Activated CD4-positive, alpha-beta T cell treated with anti-CD3 and anti-CD28 coated beads, Interleukin-2, amount 10 ng/mL, durations not matched to agents 24 days and 14 days (primary cell): ENCODE measurements at regions of chr14 and their contacts with region 1.

Region 1: GRCh38 chr14:44897045-44897844 is 64.5 kb downstream of the KLHL28 start:
- DNase-seq: peak; percentile 96
- H3K4me3 Mint-ChIP-seq: peak overlapping the region; percentile 86
- H3K27ac Mint-ChIP-seq: peak overlapping the region; percentile 93
- H3K4me1 Mint-ChIP-seq: peaks cover 10% of the 10 kb centered on the region
- H3K27me3 Mint-ChIP-seq: no peaks in the 10 kb centered on the region

Region 2: DNA sequence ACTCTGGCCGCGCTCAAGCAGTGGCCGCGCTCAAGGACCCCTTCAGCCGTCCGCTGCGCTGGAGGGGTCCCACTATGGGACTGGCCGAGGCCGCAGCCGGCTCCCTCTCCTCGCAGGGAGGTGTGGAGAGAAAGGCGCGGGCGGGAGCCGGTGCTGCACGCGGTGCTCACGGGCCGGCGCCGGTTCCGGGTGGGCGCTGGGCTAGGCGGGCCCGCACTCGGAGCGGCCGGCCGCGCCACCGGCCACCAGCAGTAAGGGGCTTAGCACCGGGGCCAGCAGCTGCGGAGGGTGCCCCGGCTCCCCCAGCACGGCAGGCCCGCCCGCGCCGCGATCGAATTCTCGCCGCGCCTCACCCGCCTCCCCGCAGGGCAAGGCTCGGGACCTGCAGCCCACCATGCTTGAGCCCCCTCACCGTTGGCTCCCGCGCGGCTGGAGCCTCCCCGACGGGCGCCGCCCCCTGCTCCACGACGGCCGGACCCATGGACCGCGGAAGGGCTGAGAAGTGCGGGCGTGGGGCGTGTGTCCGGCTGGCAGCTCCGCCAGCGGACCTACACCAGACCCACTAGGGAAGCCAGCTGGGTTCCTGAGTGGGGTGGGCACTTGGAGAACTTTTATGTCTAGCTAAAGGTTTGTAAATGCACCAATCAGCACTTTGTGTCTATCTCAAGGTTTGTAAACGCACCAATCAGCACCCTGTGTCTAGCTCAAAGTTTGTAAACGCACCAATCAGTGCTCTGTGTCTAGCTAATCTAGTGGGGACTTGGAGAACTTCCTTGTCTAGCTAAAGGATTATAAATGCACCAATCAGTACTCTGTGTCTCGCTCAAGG is 15.0 kb after region 1 on chr14:
- intact Hi-C with region 1: loop called (anchors 2 kb)
- DNase-seq: no peak
- H3K4me3 Mint-ChIP-seq: peak overlapping the region; percentile 31
- H3K27ac Mint-ChIP-seq: no peak overlapping the region
- H3K4me1 Mint-ChIP-seq: no peaks in the 10 kb centered on the region
- H3K27me3 Mint-ChIP-seq: peaks cover 40% of the 10 kb centered on the region

Region 3: GRCh38 chr14:44995196-44995595 is 98.0 kb after region 1 on chr14:
- intact Hi-C with region 1: no loop called
- DNase-seq: no peak
- H3K4me3 Mint-ChIP-seq: no peak overlapping the region
- H3K27ac Mint-ChIP-seq: no peak overlapping the region
- H3K4me1 Mint-ChIP-seq: no peaks in the 10 kb centered on the region
- H3K27me3 Mint-ChIP-seq: no peaks in the 10 kb centered on the region

Region 4: DNA sequence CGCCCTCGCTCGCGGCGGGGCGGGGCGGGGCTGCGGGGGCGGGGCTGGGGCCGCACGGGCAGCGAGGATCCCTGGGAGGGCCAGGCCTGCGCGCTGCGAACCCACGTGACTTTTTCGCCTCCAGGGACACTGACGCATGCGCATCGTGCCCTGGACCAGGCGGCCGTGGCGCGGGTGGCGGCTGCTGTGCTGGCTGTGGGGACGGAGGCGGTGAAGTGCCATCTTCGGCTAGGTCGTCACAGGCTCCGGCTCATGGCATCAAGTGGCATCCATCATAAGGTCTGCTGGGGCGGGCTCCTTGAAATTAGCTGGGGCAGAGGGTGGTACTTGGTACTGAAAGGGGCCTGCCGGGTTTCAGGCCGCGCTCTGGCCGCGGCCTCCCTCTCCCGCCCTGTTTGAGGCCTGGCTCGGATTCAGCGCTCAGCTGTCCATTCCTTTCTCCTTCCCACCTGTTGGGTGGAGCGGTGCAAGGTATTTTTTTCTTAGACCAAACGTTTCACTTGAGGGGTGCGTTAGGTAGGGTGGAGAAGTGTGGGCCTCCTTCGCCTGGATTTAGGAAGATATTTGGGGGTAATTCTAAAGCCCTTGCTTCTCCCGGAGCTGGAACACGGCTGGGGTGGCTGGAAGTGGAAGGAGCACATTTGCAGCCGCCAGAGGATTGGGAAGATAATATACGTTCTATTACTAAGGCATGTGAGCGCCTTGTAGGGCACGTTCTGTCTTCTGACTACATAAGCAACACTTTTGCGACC is 186.9 kb after region 1 on chr14 and contains the start of gene PRPF39:
- intact Hi-C with region 1: loop called (anchors 1 kb)
- DNase-seq: peak; percentile 99
- H3K4me3 Mint-ChIP-seq: peak within 1 kb of the TSS; percentile 98
- H3K27ac Mint-ChIP-seq: peak within 1 kb of the TSS; percentile 98
- H3K4me1 Mint-ChIP-seq: peaks cover 35% of the 10 kb centered on the region
- H3K27me3 Mint-ChIP-seq: no peaks in the 10 kb centered on the region
- total RNA-seq, gene PRPF39: 48.1 and 50.5 TPM in 2 replicates

Region 5: GRCh38 chr14:45267071-45267470 is 369.8 kb after region 1 on chr14:
- intact Hi-C with region 1: loop called (anchors 5 kb)
- DNase-seq: no peak
- H3K4me3 Mint-ChIP-seq: no peak overlapping the region
- H3K27ac Mint-ChIP-seq: no peak overlapping the region
- H3K4me1 Mint-ChIP-seq: peaks cover 5% of the 10 kb centered on the region
- H3K27me3 Mint-ChIP-seq: peaks cover 15% of the 10 kb centered on the region